Tibial artery (tissue), 4 donors: ENCODE measurements at regions of chr16 and their contacts with region 1.

Region 1: DNA sequence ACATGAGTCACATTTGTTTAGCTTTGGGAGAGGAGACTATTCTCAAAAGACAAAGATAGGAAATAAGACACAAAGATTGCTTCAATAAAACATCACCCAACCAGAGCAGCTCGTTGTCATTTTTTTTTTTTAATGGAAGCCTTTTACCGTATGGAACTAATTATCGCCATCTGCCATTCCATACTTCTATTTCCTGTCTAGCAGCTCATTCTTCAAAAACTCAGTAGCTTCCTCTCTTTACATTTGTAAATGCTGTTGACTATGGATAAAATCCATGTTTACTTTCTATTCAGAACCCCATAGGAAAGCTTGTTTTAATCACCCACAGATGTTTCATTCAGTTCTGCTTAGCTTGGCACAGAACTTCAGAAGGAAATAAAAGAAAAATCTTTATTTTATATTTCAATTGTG is 110.0 kb upstream of the PSMD7 start:
- DNase-seq: no peak
- H3K4me3 ChIP-seq: no peak overlapping the region
- H3K27ac ChIP-seq: no peak overlapping the region
- H3K4me1 ChIP-seq: no peaks in the 10 kb centered on the region
- H3K27me3 ChIP-seq: no peaks in the 10 kb centered on the region
- CTCF ChIP-seq: no peak

Region 2: GRCh38 chr16:73743665-73744496 is 442.7 kb before region 1 on chr16:
- intact Hi-C with region 1: no loop called
- DNase-seq: no peak
- H3K4me3 ChIP-seq: no peak overlapping the region
- H3K27ac ChIP-seq: no peak overlapping the region
- H3K4me1 ChIP-seq: peaks cover 0 to 21% (median 0%) of the 10 kb centered on the region in 4 donors
- H3K27me3 ChIP-seq: no peaks in the 10 kb centered on the region
- CTCF ChIP-seq: no peak

Region 3: GRCh38 chr16:73993872-73994271 is 192.7 kb before region 1 on chr16:
- intact Hi-C with region 1: loop called (anchors 5 kb)
- DNase-seq: no peak
- H3K4me3 ChIP-seq: no peak overlapping the region
- H3K27ac ChIP-seq: no peak overlapping the region
- H3K4me1 ChIP-seq: no peaks in the 10 kb centered on the region
- H3K27me3 ChIP-seq: no peaks in the 10 kb centered on the region
- CTCF ChIP-seq: no peak

Region 4: GRCh38 chr16:74257061-74257460 is 70.5 kb after region 1 on chr16:
- intact Hi-C with region 1: no loop called
- DNase-seq: no peak
- H3K4me3 ChIP-seq: no peak overlapping the region
- H3K27ac ChIP-seq: no peak overlapping the region
- H3K4me1 ChIP-seq: no peaks in the 10 kb centered on the region
- H3K27me3 ChIP-seq: no peaks in the 10 kb centered on the region
- CTCF ChIP-seq: no peak